CD8-positive, alpha-beta T cell (primary cell): ENCODE measurements at regions of chr12 and their contacts with region 1.

Region 1: GRCh38 chr12:53508534-53509199 is 1.4 kb upstream of the NPFF start:
- DNase-seq: peak; percentile 64 to 90 (median 83)
- ATAC-seq: peak; percentile 100
- H3K4me3 ChIP-seq: no peak overlapping the region
- H3K4me3 Mint-ChIP-seq: no peak overlapping the region
- H3K27ac ChIP-seq: peak overlapping the region in 1 of 2 experiments; percentile 17
- H3K27ac Mint-ChIP-seq: no peak overlapping the region
- H3K4me1 ChIP-seq: peaks cover 9% of the 10 kb centered on the region
- H3K4me1 Mint-ChIP-seq: peaks cover 5% of the 10 kb centered on the region
- H3K27me3 ChIP-seq: no peaks in the 10 kb centered on the region
- H3K27me3 Mint-ChIP-seq: no peaks in the 10 kb centered on the region
- CTCF ChIP-seq: peak; percentile 84

Region 2: GRCh38 chr12:53071591-53072551 is 436.8 kb before region 1 on chr12:
- CTCF ChIA-PET with region 1: no interaction called
- POLR2A ChIA-PET with region 1: no interaction called
- intact Hi-C with region 1: no loop called
- DNase-seq: no peak
- ATAC-seq: no peak
- H3K4me3 ChIP-seq: no peak overlapping the region
- H3K4me3 Mint-ChIP-seq: no peak overlapping the region
- H3K27ac ChIP-seq: no peak overlapping the region
- H3K27ac Mint-ChIP-seq: peak overlapping the region; percentile 37
- H3K4me1 ChIP-seq: no peaks in the 10 kb centered on the region
- H3K4me1 Mint-ChIP-seq: peaks cover 26% of the 10 kb centered on the region
- H3K27me3 ChIP-seq: no peaks in the 10 kb centered on the region
- H3K27me3 Mint-ChIP-seq: no peaks in the 10 kb centered on the region
- CTCF ChIP-seq: no peak

Region 3: GRCh38 chr12:53352331-53353256 is 156.1 kb before region 1 on chr12:
- CTCF ChIA-PET with region 1: interaction called, 104 read pairs
- POLR2A ChIA-PET with region 1: no interaction called
- intact Hi-C with region 1: loop called (anchors 1 kb)
- DNase-seq: peak; percentile 67 to 92 (median 82)
- ATAC-seq: peak; percentile 100
- H3K4me3 ChIP-seq: no peak overlapping the region
- H3K4me3 Mint-ChIP-seq: no peak overlapping the region
- H3K27ac ChIP-seq: no peak overlapping the region
- H3K27ac Mint-ChIP-seq: peak overlapping the region; percentile 8
- H3K4me1 ChIP-seq: no peaks in the 10 kb centered on the region
- H3K4me1 Mint-ChIP-seq: peaks cover 6% of the 10 kb centered on the region
- H3K27me3 ChIP-seq: no peaks in the 10 kb centered on the region
- H3K27me3 Mint-ChIP-seq: no peaks in the 10 kb centered on the region
- CTCF ChIP-seq: peak; percentile 75

Region 4: GRCh38 chr12:53414756-53415417 is 93.8 kb before region 1 on chr12:
- CTCF ChIA-PET with region 1: interaction called, 30 read pairs
- POLR2A ChIA-PET with region 1: no interaction called
- intact Hi-C with region 1: no loop called
- DNase-seq: no peak
- ATAC-seq: no peak
- H3K4me3 ChIP-seq: no peak overlapping the region
- H3K4me3 Mint-ChIP-seq: no peak overlapping the region
- H3K27ac ChIP-seq: no peak overlapping the region
- H3K27ac Mint-ChIP-seq: peak overlapping the region; percentile 50
- H3K4me1 ChIP-seq: no peaks in the 10 kb centered on the region
- H3K4me1 Mint-ChIP-seq: peaks cover 30% of the 10 kb centered on the region
- H3K27me3 ChIP-seq: no peaks in the 10 kb centered on the region
- H3K27me3 Mint-ChIP-seq: no peaks in the 10 kb centered on the region
- CTCF ChIP-seq: no peak

Region 5: GRCh38 chr12:53476769-53477209 is 31.9 kb before region 1 on chr12:
- CTCF ChIA-PET with region 1: interaction called, 46 read pairs
- POLR2A ChIA-PET with region 1: interaction called, 3 read pairs
- intact Hi-C with region 1: loop called (anchors 1 to 5 kb)
- DNase-seq: peak in 2 of 9 experiments; percentile 19 to 37
- ATAC-seq: peak; percentile 37
- H3K4me3 ChIP-seq: no peak overlapping the region
- H3K4me3 Mint-ChIP-seq: no peak overlapping the region
- H3K27ac ChIP-seq: no peak overlapping the region
- H3K27ac Mint-ChIP-seq: no peak overlapping the region
- H3K4me1 ChIP-seq: peaks cover 25% of the 10 kb centered on the region
- H3K4me1 Mint-ChIP-seq: peaks cover 52% of the 10 kb centered on the region
- H3K27me3 ChIP-seq: no peaks in the 10 kb centered on the region
- H3K27me3 Mint-ChIP-seq: no peaks in the 10 kb centered on the region
- CTCF ChIP-seq: no peak

Region 6: GRCh38 chr12:53481957-53482586 is 26.6 kb before region 1 on chr12:
- CTCF ChIA-PET with region 1: interaction called, 46 read pairs
- POLR2A ChIA-PET with region 1: no interaction called
- intact Hi-C with region 1: loop called (anchors 1 to 2 kb)
- DNase-seq: peak in 3 of 9 experiments; percentile 32 to 47 (median 34)
- ATAC-seq: peak; percentile 76
- H3K4me3 ChIP-seq: no peak overlapping the region
- H3K4me3 Mint-ChIP-seq: no peak overlapping the region
- H3K27ac ChIP-seq: no peak overlapping the region
- H3K27ac Mint-ChIP-seq: peak overlapping the region; percentile 64
- H3K4me1 ChIP-seq: no peaks in the 10 kb centered on the region
- H3K4me1 Mint-ChIP-seq: peaks cover 11% of the 10 kb centered on the region
- H3K27me3 ChIP-seq: no peaks in the 10 kb centered on the region
- H3K27me3 Mint-ChIP-seq: no peaks in the 10 kb centered on the region
- CTCF ChIP-seq: peak; percentile 34

Region 7: GRCh38 chr12:53492830-53493611 is 15.6 kb before region 1 on chr12:
- CTCF ChIA-PET with region 1: interaction called, 13 read pairs
- POLR2A ChIA-PET with region 1: interaction called, 5 read pairs
- intact Hi-C with region 1: no loop called
- DNase-seq: peak; percentile 66 to 93 (median 85)
- ATAC-seq: peak; percentile 93
- H3K4me3 ChIP-seq: peak overlapping the region; percentile 61 to 66
- H3K4me3 Mint-ChIP-seq: peak overlapping the region; percentile 89
- H3K27ac ChIP-seq: peak overlapping the region; percentile 67 to 85
- H3K27ac Mint-ChIP-seq: peak overlapping the region; percentile 91
- H3K4me1 ChIP-seq: peaks cover 20% of the 10 kb centered on the region
- H3K4me1 Mint-ChIP-seq: peaks cover 38% of the 10 kb centered on the region
- H3K27me3 ChIP-seq: no peaks in the 10 kb centered on the region
- H3K27me3 Mint-ChIP-seq: no peaks in the 10 kb centered on the region
- CTCF ChIP-seq: no peak

Region 8: GRCh38 chr12:53523131-53523530 is 14.5 kb after region 1 on chr12:
- CTCF ChIA-PET with region 1: interaction called, 11 read pairs
- POLR2A ChIA-PET with region 1: no interaction called
- intact Hi-C with region 1: no loop called
- DNase-seq: no peak
- ATAC-seq: no peak
- H3K4me3 ChIP-seq: no peak overlapping the region
- H3K4me3 Mint-ChIP-seq: no peak overlapping the region
- H3K27ac ChIP-seq: no peak overlapping the region
- H3K27ac Mint-ChIP-seq: no peak overlapping the region
- H3K4me1 ChIP-seq: no peaks in the 10 kb centered on the region
- H3K4me1 Mint-ChIP-seq: no peaks in the 10 kb centered on the region
- H3K27me3 ChIP-seq: no peaks in the 10 kb centered on the region
- H3K27me3 Mint-ChIP-seq: no peaks in the 10 kb centered on the region
- CTCF ChIP-seq: no peak